SK-N-SH (cell line): ENCODE measurements at regions of chr10 and their contacts with region 1.

Region 1: GRCh38 chr10:131453594-131454355 is 142.3 kb upstream of the TCERG1L start:
- DNase-seq: peak; percentile 85
- H3K4me3 ChIP-seq: no peak overlapping the region
- H3K27ac ChIP-seq: no peak overlapping the region
- H3K4me1 ChIP-seq: peaks cover 0 to 3% of the 10 kb centered on the region in 2 experiments; a peak in 1 of 4 replicates
- H3K27me3 ChIP-seq: no peaks in the 10 kb centered on the region
- CTCF ChIP-seq: peak; percentile 40
- EP300 ChIP-seq: no peak
- RAD21 ChIP-seq: peak; percentile 66

Region 2: DNA sequence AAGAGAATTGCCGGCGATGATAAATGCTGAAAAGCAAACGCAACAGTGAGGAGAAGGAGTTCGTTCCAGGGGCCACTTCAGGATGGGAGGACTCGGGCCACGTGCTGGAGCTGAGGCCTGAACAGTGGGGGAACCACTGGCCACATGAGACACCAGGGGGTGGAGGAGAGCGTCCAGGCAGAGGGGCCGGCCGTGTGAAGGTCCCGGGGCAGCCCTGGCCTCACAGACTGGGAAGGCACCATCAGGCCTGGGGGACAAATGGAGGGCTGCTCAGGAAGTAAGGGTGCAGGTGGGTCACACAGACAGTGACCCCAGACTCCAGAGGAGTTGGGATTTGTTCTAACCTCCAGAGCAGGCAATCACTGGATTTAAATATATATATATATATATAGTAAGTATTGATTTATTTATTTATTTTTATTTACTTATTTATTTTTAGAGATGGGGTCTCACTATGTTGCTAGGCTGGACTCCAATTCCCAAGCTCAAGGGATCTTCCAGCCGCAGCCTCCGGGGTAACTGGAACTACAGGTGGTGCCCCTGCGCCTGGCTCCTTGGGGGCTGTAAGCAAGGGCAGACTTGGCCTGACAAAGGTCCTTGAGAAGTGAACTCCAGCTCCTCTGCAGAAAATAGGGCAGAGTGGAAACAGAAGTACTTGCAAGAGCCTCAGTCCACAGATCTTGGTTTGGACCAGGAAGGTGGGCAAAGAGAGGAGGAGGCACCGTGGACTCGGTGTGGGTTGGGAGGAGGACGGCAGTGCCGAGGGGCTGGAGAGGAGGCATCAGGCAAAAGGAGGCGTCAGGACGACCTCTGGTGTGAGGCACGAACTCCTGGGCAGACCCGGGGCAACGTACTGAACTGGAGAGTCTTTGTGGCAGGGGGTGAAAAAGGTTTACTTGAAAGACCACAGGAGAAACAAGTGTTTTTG is 199.6 kb before region 1 on chr10:
- CTCF ChIA-PET with region 1: no interaction called
- POLR2A ChIA-PET with region 1: no interaction called
- DNase-seq: no peak
- H3K4me3 ChIP-seq: no peak overlapping the region
- H3K27ac ChIP-seq: no peak overlapping the region
- H3K4me1 ChIP-seq: peaks cover 0 to 10% of the 10 kb centered on the region in 2 experiments; a peak in 1 of 4 replicates
- H3K27me3 ChIP-seq: no peaks in the 10 kb centered on the region
- CTCF ChIP-seq: no peak
- EP300 ChIP-seq: no peak
- RAD21 ChIP-seq: no peak

Region 3: DNA sequence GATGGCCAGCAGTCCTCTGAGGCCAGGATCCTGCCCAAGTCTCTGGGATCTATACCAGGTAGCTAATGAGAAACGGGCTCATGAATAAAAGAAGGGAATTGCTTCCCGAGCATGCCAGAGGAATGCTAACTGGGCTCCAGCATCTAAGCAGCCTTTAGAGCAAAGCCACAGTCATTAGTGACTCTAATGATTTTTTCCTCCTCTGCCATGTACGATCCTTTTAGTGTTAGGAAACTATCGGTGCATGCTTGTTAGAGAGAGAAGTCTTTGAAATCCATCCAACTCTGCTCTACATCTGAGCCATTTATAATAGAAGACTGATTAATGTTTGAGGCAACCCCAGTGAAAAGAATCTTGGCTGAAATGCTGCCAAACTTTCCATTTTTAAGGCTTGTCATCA is 17.3 kb before region 1 on chr10:
- CTCF ChIA-PET with region 1: interaction called, 52 read pairs
- POLR2A ChIA-PET with region 1: no interaction called
- DNase-seq: no peak
- H3K4me3 ChIP-seq: no peak overlapping the region
- H3K27ac ChIP-seq: no peak overlapping the region
- H3K4me1 ChIP-seq: peaks cover 0 to 10% of the 10 kb centered on the region in 2 experiments; a peak in 1 of 4 replicates
- H3K27me3 ChIP-seq: no peaks in the 10 kb centered on the region
- CTCF ChIP-seq: no peak
- EP300 ChIP-seq: no peak
- RAD21 ChIP-seq: no peak

Region 4: DNA sequence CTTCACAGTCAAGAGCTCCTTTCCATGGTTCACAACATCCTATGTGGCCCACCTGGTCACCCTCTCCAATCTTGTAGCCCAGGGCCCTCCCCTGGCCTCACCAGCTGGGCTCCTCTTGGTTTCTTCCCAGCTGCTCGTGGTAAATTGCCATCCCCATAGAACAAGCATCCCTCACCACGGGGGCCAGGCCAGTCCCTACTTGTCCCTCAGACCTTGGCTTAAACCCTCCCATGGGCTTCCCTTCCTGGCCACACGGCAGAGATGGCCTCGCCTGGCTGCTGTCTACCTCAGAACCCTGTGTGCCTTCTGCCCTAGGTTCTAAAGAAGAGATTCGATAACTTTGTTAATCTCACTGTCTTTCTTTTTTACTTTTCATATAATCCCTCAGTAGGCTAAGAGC is 11.0 kb after region 1 on chr10:
- CTCF ChIA-PET with region 1: interaction called, 31 read pairs
- POLR2A ChIA-PET with region 1: no interaction called
- DNase-seq: no peak
- H3K4me3 ChIP-seq: no peak overlapping the region
- H3K27ac ChIP-seq: no peak overlapping the region
- H3K4me1 ChIP-seq: no peaks in the 10 kb centered on the region; a peak in 1 of 4 replicates
- H3K27me3 ChIP-seq: no peaks in the 10 kb centered on the region
- CTCF ChIP-seq: no peak
- EP300 ChIP-seq: no peak
- RAD21 ChIP-seq: no peak

Region 5: DNA sequence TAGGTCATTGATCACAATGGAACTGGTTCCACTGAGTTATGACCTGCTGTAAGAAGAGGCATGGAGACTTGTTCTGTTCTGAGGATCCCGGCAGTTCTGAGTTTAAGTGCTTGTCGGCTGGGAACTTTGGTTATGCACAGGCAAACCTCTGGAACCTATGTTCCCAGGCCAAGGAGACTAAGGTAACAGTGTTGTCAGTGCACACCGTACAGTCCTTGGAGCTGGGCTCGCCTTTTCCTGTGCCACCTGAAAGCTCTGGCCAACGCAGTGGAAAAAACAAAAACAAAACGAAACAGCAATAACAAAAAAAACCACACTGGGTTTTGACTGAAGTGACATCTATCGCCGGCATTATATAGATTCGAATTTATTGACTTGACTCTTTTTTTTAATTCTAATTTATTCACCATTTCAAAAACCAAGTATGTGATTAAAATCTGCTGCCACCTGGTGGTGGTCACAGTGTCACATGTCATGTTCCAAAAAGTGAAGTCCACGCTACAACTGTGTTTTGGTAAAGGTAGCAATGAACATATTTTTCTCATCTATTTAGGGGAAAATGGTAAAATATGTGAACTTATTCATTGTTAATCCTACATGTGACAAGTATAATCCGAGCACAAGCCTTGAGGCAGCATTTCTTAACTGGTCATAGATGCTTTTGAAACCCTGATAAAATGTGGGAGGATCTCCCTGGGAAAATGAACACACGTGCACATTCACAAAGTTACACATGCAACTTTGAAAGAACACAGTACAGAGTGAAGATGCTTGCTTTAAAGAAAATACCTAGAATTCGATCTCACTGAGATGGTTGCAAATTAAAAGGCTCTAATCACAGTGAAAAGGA is 333.2 kb after region 1 on chr10:
- CTCF ChIA-PET with region 1: interaction called, 46 read pairs
- POLR2A ChIA-PET with region 1: no interaction called
- DNase-seq: peak; percentile 51
- H3K4me3 ChIP-seq: no peak overlapping the region
- H3K27ac ChIP-seq: no peak overlapping the region
- H3K4me1 ChIP-seq: no peaks in the 10 kb centered on the region
- H3K27me3 ChIP-seq: no peaks in the 10 kb centered on the region
- CTCF ChIP-seq: peak; percentile 65
- EP300 ChIP-seq: no peak
- RAD21 ChIP-seq: peak; percentile 76